ENCODE measurements at regions of chr21 and their contacts with region 1.

Region 1: DNA sequence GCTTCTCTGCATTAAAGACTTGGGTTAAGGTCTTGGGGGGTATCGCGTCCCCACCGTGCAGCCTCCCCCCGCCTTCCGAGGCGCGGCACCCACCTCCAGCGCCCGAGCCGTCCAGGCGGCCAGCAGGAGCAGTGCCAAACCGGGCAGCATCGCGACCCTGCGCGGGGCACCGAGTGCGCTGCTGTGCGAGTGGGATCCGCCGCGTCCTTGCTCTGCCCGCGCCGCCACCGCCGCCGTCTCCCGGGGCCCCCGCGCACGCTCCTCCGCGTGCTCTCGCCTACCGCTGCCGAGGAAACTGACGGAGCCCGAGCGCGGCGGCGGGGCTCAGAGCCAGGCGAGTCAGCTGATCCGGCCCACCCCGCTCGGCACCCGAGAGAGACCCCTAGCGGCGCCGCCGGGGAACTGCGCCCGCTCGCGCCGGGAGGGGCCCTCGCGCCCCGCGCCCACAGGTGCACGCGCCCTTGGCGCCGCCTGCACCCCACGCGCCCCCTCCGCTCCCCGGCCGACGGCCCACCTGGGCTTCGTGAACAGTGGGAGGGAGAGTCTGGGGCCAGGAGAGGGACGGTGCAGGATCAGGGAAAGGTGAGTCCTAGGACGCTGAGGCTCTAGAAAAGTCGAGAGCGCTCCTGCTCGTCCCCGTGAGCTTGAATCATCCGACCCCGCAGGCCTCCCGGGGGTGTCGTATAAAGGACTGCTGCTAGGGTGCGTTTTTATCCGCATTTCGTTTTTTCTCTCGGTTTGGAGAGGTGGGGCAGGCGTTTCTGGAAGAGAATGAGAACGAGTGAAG is at the start of gene APP:
- DNase-seq: peak; percentile 77
- H3K4me3 ChIP-seq: peak within 1 kb of the TSS; percentile 81 to 99 (median 94)
- H3K27ac ChIP-seq: peak within 1 kb of the TSS; percentile 85
- H3K4me1 ChIP-seq: peaks cover 31% of the 10 kb centered on the region
- H3K27me3 ChIP-seq: no peaks in the 10 kb centered on the region
- CTCF ChIP-seq: peak; percentile 59 to 71
- total RNA-seq, gene APP: 1,070 to 1,289 TPM

Region 2: DNA sequence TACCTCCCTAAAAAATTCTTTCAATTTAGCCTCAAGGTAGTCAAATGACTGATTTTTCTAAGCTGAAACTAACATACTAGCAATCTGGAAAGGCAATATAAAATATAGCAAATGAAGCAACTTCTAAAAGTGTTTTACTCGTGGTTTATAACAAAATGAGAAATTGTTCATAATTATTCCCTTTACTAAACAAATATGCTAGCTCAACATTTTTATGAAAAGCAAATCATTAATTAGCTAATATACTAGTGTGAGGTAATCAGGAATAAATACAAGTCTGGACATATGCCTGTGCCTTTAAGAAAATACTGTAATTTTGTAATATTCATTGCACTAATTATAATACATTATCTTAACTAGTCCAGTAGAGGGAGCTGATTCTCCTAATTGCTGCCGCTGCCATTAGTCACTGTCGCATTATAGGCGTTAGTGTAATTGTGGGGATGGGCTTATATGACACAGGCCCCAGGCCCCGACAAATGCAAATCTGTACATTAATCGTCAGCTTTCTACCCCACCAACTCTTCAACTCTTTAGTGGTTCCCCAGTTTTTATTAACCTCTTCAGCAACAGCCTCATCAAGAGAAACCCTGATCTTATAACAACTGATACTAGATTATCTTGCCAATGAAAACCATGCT is 275.0 kb before region 1 on chr21:
- CTCF ChIA-PET with region 1: no interaction called
- dilution Hi-C with region 1: no loop called
- in situ Hi-C with region 1: no loop called
- intact Hi-C with region 1: loop called (anchors 5 kb)
- DNase-seq: peak; percentile 21
- H3K4me3 ChIP-seq: no peak overlapping the region
- H3K27ac ChIP-seq: no peak overlapping the region
- H3K4me1 ChIP-seq: peaks cover 16% of the 10 kb centered on the region
- H3K27me3 ChIP-seq: no peaks in the 10 kb centered on the region
- CTCF ChIP-seq: peak; percentile 52 to 66

Region 3: GRCh38 chr21:26099610-26100219 is 70.9 kb before region 1 on chr21:
- CTCF ChIA-PET with region 1: no interaction called
- dilution Hi-C with region 1: no loop called
- in situ Hi-C with region 1: no loop called
- intact Hi-C with region 1: loop called (anchors 10 kb)
- DNase-seq: no peak
- H3K4me3 ChIP-seq: no peak overlapping the region
- H3K27ac ChIP-seq: peak overlapping the region; percentile 66
- H3K4me1 ChIP-seq: peaks cover 16% of the 10 kb centered on the region
- H3K27me3 ChIP-seq: no peaks in the 10 kb centered on the region
- CTCF ChIP-seq: no peak

Region 4: GRCh38 chr21:26127918-26128317 is 42.7 kb before region 1 on chr21:
- CTCF ChIA-PET with region 1: no interaction called
- dilution Hi-C with region 1: no loop called
- in situ Hi-C with region 1: no loop called
- intact Hi-C with region 1: loop called (anchors 5 kb)
- DNase-seq: peak; percentile 34
- H3K4me3 ChIP-seq: no peak overlapping the region
- H3K27ac ChIP-seq: no peak overlapping the region
- H3K4me1 ChIP-seq: peaks cover 49% of the 10 kb centered on the region
- H3K27me3 ChIP-seq: no peaks in the 10 kb centered on the region
- CTCF ChIP-seq: no peak

Region 5: DNA sequence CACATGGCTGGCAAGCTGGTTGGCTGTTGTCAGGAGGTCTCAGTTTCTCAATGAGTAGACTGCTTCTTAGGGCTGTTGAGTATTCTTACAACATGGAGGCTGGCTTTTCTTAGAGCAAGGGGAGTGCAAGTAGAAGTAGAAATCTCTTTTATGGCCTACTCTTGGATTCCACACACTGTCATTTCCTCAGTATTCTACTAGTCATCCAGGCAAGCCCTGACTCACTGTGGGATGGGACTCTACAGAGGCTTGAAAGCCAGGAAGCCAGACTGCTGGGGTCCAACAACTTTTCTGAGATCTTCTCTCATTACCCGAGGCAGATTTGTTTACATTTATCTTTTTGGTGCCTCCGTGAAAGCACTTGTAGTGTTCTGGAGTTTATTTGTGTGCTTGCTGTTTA is 196.1 kb after region 1 on chr21:
- CTCF ChIA-PET with region 1: no interaction called
- dilution Hi-C with region 1: no loop called
- in situ Hi-C with region 1: no loop called
- intact Hi-C with region 1: no loop called
- DNase-seq: peak; percentile 51
- H3K4me3 ChIP-seq: no peak overlapping the region
- H3K27ac ChIP-seq: peak overlapping the region; percentile 9
- H3K4me1 ChIP-seq: peaks cover 14% of the 10 kb centered on the region
- H3K27me3 ChIP-seq: no peaks in the 10 kb centered on the region
- CTCF ChIP-seq: no peak

Region 6: GRCh38 chr21:26389971-26390641 is 219.4 kb after region 1 on chr21:
- CTCF ChIA-PET with region 1: no interaction called
- dilution Hi-C with region 1: no loop called
- in situ Hi-C with region 1: no loop called
- intact Hi-C with region 1: loop called (anchors 1 kb)
- DNase-seq: peak; percentile 100
- H3K4me3 ChIP-seq: no peak overlapping the region
- H3K27ac ChIP-seq: peak overlapping the region; percentile 79
- H3K4me1 ChIP-seq: peaks cover 47% of the 10 kb centered on the region
- H3K27me3 ChIP-seq: no peaks in the 10 kb centered on the region
- CTCF ChIP-seq: no peak

Region 7: DNA sequence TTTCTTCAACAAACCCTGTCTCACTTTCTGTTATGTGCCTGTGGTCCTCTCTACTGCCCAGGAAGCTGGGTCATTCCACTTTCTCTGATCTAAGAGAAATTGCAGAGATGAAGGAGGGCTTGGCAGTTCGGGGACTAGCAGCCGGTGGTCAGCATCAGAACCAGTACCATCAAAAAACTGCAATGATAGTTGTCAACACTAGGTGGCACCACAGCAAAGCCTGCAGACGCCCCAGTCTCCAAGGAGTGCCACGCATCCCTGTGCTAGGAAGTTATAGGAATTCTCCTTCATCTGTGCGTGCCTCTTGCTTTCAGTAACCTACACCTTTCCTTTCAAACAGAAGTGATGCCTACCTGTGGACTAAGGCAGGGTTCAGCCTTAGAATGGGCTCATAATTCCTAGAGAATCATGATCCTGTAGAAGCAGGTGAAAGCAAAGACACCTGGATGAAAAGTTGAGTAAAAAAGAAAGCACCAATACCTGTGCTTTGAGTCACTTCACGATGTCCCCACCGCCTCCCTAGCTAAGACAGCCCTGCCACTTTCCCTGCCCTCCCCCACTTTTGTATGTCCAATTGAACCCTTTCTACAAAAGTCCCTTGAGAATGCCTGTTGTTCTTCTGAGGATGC is 545.3 kb after region 1 on chr21:
- CTCF ChIA-PET with region 1: no interaction called
- dilution Hi-C with region 1: no loop called
- in situ Hi-C with region 1: loop called in 1 of 2 experiments (anchors 25 kb)
- intact Hi-C with region 1: loop called (anchors 1 kb)
- DNase-seq: peak; percentile 42
- H3K4me3 ChIP-seq: peak overlapping the region in 1 of 3 experiments; percentile 23
- H3K27ac ChIP-seq: no peak overlapping the region
- H3K4me1 ChIP-seq: peaks cover 4% of the 10 kb centered on the region
- H3K27me3 ChIP-seq: no peaks in the 10 kb centered on the region
- CTCF ChIP-seq: peak; percentile 85 to 86

Measured in mammary epithelial cell (primary cell).